Sigmoid colon (tissue), 7 donors: ENCODE measurements at regions of chr5 and their contacts with region 1.

Region 1: GRCh38 chr5:139633295-139634027 is 14.7 kb upstream of the CXXC5 start:
- DNase-seq: peak; percentile 85
- H3K4me3 ChIP-seq: no peak overlapping the region
- H3K27ac ChIP-seq: no peak overlapping the region
- H3K4me1 ChIP-seq: peaks cover 0 to 33% (median 27%) of the 10 kb centered on the region in 4 donors
- H3K27me3 ChIP-seq: no peaks in the 10 kb centered on the region
- CTCF ChIP-seq: peak; percentile 96 to 99 (median 98)
- EP300 ChIP-seq: no peak
- POLR2A ChIP-seq: no peak

Region 2: GRCh38 chr5:139646912-139647505 is 13.5 kb after region 1 on chr5:
- intact Hi-C with region 1: loop called (anchors 1 kb)
- DNase-seq: peak; percentile 65
- H3K4me3 ChIP-seq: peak overlapping the region in 3 of 4 donors; percentile 4 to 92 (median 86)
- H3K27ac ChIP-seq: peak overlapping the region in 2 of 4 donors; percentile 5 to 95
- H3K4me1 ChIP-seq: peaks cover 0 to 57% (median 49%) of the 10 kb centered on the region in 4 donors
- H3K27me3 ChIP-seq: peaks cover 0 to 20% (median 0%) of the 10 kb centered on the region in 3 donors
- CTCF ChIP-seq: no peak
- EP300 ChIP-seq: no peak
- POLR2A ChIP-seq: no peak

Region 3: GRCh38 chr5:139690064-139690802 is 56.8 kb after region 1 on chr5:
- intact Hi-C with region 1: loop called (anchors 2 kb)
- DNase-seq: no peak
- H3K4me3 ChIP-seq: no peak overlapping the region
- H3K27ac ChIP-seq: peak overlapping the region in 1 of 4 donors; percentile 25
- H3K4me1 ChIP-seq: peaks cover 0 to 22% (median 18%) of the 10 kb centered on the region in 4 donors
- H3K27me3 ChIP-seq: no peaks in the 10 kb centered on the region
- CTCF ChIP-seq: peak; percentile 12 to 64 (median 44)
- EP300 ChIP-seq: no peak
- POLR2A ChIP-seq: no peak

Region 4: GRCh38 chr5:139765409-139766217 is 132.2 kb after region 1 on chr5:
- intact Hi-C with region 1: loop called (anchors 1 kb)
- DNase-seq: peak; percentile 81
- H3K4me3 ChIP-seq: peak overlapping the region; percentile 24 to 57 (median 49)
- H3K27ac ChIP-seq: peak overlapping the region in 1 of 4 donors; percentile 38
- H3K4me1 ChIP-seq: peaks cover 0 to 18% (median 3%) of the 10 kb centered on the region in 4 donors
- H3K27me3 ChIP-seq: peaks cover 12 to 26% (median 21%) of the 10 kb centered on the region in 3 donors
- CTCF ChIP-seq: peak; percentile 99 to 100 (median 99)
- EP300 ChIP-seq: no peak
- POLR2A ChIP-seq: no peak

Region 5: DNA sequence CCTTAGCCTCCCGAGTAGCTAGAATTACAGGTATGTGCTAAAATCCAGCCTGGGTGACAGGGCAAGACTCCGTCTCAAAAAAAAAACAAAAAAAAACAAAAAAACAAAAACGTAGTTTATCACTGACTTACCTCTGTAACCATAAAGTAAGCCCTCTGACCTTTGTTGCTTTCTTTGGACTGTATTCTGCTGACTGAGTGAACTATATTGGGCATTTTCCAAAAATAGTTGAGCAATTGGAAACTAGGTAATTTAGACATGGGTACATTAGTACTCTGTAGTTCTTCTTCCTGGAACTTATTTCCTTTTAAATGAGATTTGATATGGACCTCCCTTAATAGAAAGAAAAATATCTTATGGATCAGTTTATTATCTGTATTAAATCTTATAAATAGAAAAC is 834.7 kb after region 1 on chr5:
- intact Hi-C with region 1: no loop called
- DNase-seq: no peak
- H3K4me3 ChIP-seq: no peak overlapping the region
- H3K27ac ChIP-seq: no peak overlapping the region
- H3K4me1 ChIP-seq: no peaks in the 10 kb centered on the region
- H3K27me3 ChIP-seq: no peaks in the 10 kb centered on the region
- CTCF ChIP-seq: no peak
- EP300 ChIP-seq: no peak
- POLR2A ChIP-seq: no peak